ENCODE measurements at regions of chr13 and their contacts with region 1.

Region 1: GRCh38 chr13:25085125-25085742 is 10.7 kb upstream of the PABPC3 start:
- H3K4me3 ChIP-seq: no peak overlapping the region
- H3K27ac ChIP-seq: no peak overlapping the region
- H3K4me1 ChIP-seq: no peaks in the 10 kb centered on the region
- CTCF ChIP-seq: no peak

Region 2: DNA sequence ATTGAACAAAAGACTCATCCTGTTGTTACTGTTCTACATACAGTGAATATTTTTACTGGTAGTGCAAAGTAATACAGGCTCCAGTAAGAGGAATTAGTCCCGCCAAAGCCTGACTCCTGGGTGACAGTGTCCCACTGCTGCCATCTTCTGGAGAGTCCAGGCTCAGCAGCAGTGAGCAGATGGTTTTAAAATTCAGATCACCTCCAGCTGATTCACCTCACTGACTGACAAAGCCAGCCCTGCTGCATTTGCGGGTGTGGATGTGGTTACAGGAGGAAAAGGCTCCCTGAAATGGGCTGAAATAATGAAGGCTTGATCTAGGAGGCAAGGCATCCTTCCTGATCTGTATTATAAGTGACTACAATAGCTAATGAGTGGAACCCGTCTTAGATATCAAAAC is 29.0 kb after region 1 on chr13:
- CTCF ChIA-PET with region 1: interaction called, 47 read pairs
- POLR2A ChIA-PET with region 1: no interaction called
- H3K4me3 ChIP-seq: no peak overlapping the region
- H3K27ac ChIP-seq: no peak overlapping the region
- H3K4me1 ChIP-seq: no peaks in the 10 kb centered on the region
- CTCF ChIP-seq: peak; percentile 55; the same call in 1 of the 2 replicates